Head of caudate nucleus (tissue), 42 donors: ENCODE measurements at regions of chr12 and their contacts with region 1.

Region 1: DNA sequence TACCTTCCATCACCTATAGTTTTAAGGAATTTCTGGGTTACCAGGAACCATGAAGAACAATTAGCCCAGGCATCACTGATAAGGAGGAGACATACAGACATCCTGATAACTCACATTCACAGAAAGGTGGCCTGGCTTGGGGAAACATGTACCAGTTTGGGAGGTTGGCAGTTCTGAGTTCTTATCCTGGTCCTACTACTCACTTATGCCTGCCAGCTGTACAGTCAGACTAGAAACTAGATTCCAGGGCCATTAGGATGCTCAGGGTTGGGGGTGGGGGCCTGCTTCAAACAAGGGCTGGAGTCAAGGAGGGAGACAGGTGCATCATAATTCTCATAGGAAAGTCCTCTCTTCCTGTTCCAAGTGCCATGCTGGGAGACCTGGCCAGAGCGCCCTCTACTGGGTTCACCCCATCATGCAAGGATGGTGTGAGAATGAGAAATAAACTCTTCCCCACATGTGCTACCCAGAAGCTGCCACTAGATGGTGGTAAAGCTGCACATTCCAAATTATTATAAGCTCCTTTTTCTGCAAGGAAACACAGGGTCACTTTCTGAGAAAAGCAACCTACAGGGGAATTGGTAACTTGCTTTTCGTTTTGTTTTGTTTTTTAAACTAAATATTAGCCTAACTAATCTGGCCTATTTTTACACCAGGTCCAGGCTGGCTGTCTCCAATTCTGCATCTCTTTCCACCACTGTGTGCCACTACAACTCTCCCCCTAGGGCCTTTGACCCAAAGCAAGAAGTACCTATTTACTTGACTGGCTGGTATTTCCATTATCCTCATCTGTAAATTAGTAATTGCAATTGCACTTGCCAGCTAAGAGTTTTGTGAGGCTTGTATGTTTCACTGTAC is 14.5 kb downstream of the OAS2 start:
- DNase-seq: peak in 31 of 42 donors; percentile 21 to 74 (median 52)

Region 2: GRCh38 chr12:113030875-113031525 is 38.2 kb after region 1 on chr12:
- intact Hi-C with region 1: loop called (anchors 2 kb)
- DNase-seq: peak in 32 of 42 donors; percentile 9 to 66 (median 31)